Caco-2 (cell line): ENCODE measurements at regions of chr4 and their contacts with region 1.

Region 1: DNA sequence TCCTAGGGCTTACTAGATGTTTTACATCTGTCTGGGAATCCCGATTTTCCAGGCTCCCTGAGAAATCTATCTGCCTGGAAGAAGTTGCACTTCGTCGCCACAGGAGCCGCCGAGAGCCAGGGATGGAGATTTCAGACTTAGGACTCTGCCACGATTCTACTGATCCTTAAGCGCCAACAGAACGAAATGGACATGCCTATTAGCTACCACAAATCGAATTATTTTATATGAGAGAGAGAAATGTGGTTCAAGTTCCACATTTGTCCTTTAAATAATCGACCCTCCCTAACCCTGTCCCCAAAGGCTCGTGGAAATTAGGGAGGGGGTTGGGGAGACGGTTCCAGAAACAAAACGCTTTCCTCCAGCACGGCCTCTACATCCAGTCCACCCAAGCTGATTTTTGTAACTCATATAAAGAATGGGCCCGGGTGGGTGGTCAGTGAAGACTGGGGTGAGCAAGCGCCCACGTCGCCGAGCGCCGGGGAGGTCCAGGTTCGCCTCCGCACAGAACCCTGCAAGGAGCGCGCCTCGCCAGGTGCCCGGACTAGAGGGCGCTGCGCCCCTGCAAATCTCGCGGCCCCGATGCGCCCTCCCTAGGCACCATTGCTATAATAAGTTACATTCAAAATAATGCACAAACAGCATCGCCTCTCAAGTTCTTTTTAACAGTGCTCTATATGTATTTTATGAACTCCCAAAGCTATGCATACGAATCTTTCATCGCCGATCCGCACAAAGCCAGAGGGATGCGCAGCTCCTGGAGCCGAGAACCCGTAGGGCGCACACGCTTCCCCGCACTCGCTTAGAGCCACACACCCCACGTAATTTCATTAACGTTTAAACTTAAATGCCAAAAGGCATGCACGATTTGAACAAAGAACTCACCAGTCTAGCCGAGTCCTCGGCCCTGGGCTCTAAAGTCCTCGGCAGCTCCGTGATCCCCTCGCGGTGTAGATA is 2.1 kb upstream of the FAT1 start:
- DNase-seq: peak; percentile 72 to 82
- H3K4me3 ChIP-seq: peak overlapping the region; percentile 83
- H3K4me3 Mint-ChIP-seq: peak overlapping the region; percentile 92
- H3K27ac Mint-ChIP-seq: peak overlapping the region; percentile 63
- H3K4me1 ChIP-seq: peaks cover 6% of the 10 kb centered on the region; the same call in 1 of the 2 replicates
- H3K4me1 Mint-ChIP-seq: peaks cover 9% of the 10 kb centered on the region
- H3K27me3 ChIP-seq: no peaks in the 10 kb centered on the region
- H3K27me3 Mint-ChIP-seq: no peaks in the 10 kb centered on the region
- CTCF ChIP-seq: peak; percentile 60 to 80

Region 2: GRCh38 chr4:186297013-186297645 is 428.6 kb before region 1 on chr4:
- CTCF ChIA-PET with region 1: no interaction called
- POLR2A ChIA-PET with region 1: no interaction called
- intact Hi-C with region 1: loop called (anchors 5 kb)
- DNase-seq: peak in 1 of 2 experiments; percentile 43
- H3K4me3 ChIP-seq: no peak overlapping the region
- H3K4me3 Mint-ChIP-seq: no peak overlapping the region
- H3K27ac Mint-ChIP-seq: no peak overlapping the region
- H3K4me1 ChIP-seq: no peaks in the 10 kb centered on the region
- H3K4me1 Mint-ChIP-seq: no peaks in the 10 kb centered on the region
- H3K27me3 ChIP-seq: no peaks in the 10 kb centered on the region
- H3K27me3 Mint-ChIP-seq: peaks cover 7% of the 10 kb centered on the region
- CTCF ChIP-seq: peak; percentile 37 to 62

Region 3: DNA sequence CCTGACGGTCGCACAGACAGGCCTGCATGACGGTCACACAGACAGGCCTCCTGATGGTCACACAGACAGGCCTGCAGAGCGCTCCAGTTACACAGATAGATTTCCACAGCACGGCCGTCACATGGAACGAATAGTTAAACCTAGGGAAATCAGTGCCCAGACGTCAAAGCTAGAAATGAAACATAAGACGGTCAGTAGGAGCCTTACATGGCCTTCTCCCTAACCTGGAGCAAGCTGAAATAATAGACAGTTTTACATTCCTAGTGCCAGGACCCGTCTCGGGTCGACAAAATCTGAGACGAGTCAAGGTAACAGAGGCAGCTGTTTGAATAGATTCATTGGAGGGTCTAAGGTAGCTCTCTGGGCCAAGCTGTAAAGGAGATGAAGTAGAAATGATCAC is 297.3 kb before region 1 on chr4:
- CTCF ChIA-PET with region 1: no interaction called
- POLR2A ChIA-PET with region 1: no interaction called
- intact Hi-C with region 1: no loop called
- DNase-seq: no peak
- H3K4me3 ChIP-seq: no peak overlapping the region
- H3K4me3 Mint-ChIP-seq: no peak overlapping the region
- H3K27ac Mint-ChIP-seq: no peak overlapping the region
- H3K4me1 ChIP-seq: no peaks in the 10 kb centered on the region
- H3K4me1 Mint-ChIP-seq: no peaks in the 10 kb centered on the region
- H3K27me3 ChIP-seq: no peaks in the 10 kb centered on the region
- H3K27me3 Mint-ChIP-seq: no peaks in the 10 kb centered on the region
- CTCF ChIP-seq: no peak

Region 4: GRCh38 chr4:186621959-186622553 is 103.7 kb before region 1 on chr4:
- CTCF ChIA-PET with region 1: no interaction called
- POLR2A ChIA-PET with region 1: no interaction called
- intact Hi-C with region 1: loop called (anchors 2 kb)
- DNase-seq: peak; percentile 79 to 86
- H3K4me3 ChIP-seq: no peak overlapping the region
- H3K4me3 Mint-ChIP-seq: no peak overlapping the region
- H3K27ac Mint-ChIP-seq: peak overlapping the region; percentile 80
- H3K4me1 ChIP-seq: peaks cover 49% of the 10 kb centered on the region
- H3K4me1 Mint-ChIP-seq: peaks cover 29% of the 10 kb centered on the region
- H3K27me3 ChIP-seq: no peaks in the 10 kb centered on the region
- H3K27me3 Mint-ChIP-seq: no peaks in the 10 kb centered on the region
- CTCF ChIP-seq: no peak

Region 5: GRCh38 chr4:186685767-186686183 is 40.0 kb before region 1 on chr4:
- CTCF ChIA-PET with region 1: interaction called, 4 read pairs
- POLR2A ChIA-PET with region 1: interaction called, 4 read pairs
- intact Hi-C with region 1: loop called (anchors 1 kb)
- DNase-seq: peak in 1 of 2 experiments; percentile 49
- H3K4me3 ChIP-seq: no peak overlapping the region
- H3K4me3 Mint-ChIP-seq: peak overlapping the region; percentile 57
- H3K27ac Mint-ChIP-seq: peak overlapping the region; percentile 87
- H3K4me1 ChIP-seq: peaks cover 83% of the 10 kb centered on the region
- H3K4me1 Mint-ChIP-seq: peaks cover 53% of the 10 kb centered on the region
- H3K27me3 ChIP-seq: no peaks in the 10 kb centered on the region
- H3K27me3 Mint-ChIP-seq: no peaks in the 10 kb centered on the region
- CTCF ChIP-seq: no peak

Region 6: GRCh38 chr4:186765138-186765537 is 39.4 kb after region 1 on chr4:
- CTCF ChIA-PET with region 1: no interaction called
- POLR2A ChIA-PET with region 1: interaction called, 3 read pairs
- intact Hi-C with region 1: loop called (anchors 5 kb)
- DNase-seq: peak; percentile 13 to 65
- H3K4me3 ChIP-seq: no peak overlapping the region
- H3K4me3 Mint-ChIP-seq: no peak overlapping the region
- H3K27ac Mint-ChIP-seq: peak overlapping the region; percentile 71
- H3K4me1 ChIP-seq: peaks cover 19% of the 10 kb centered on the region
- H3K4me1 Mint-ChIP-seq: no peaks in the 10 kb centered on the region
- H3K27me3 ChIP-seq: no peaks in the 10 kb centered on the region
- H3K27me3 Mint-ChIP-seq: no peaks in the 10 kb centered on the region
- CTCF ChIP-seq: no peak

Region 7: GRCh38 chr4:186792728-186793366 is 67.1 kb after region 1 on chr4:
- CTCF ChIA-PET with region 1: no interaction called
- POLR2A ChIA-PET with region 1: no interaction called
- intact Hi-C with region 1: no loop called
- DNase-seq: no peak
- H3K4me3 ChIP-seq: no peak overlapping the region
- H3K4me3 Mint-ChIP-seq: no peak overlapping the region
- H3K27ac Mint-ChIP-seq: no peak overlapping the region
- H3K4me1 ChIP-seq: no peaks in the 10 kb centered on the region
- H3K4me1 Mint-ChIP-seq: no peaks in the 10 kb centered on the region
- H3K27me3 ChIP-seq: no peaks in the 10 kb centered on the region
- H3K27me3 Mint-ChIP-seq: no peaks in the 10 kb centered on the region
- CTCF ChIP-seq: no peak

Region 8: GRCh38 chr4:186936496-186937375 is 211.0 kb after region 1 on chr4:
- CTCF ChIA-PET with region 1: no interaction called
- POLR2A ChIA-PET with region 1: no interaction called
- intact Hi-C with region 1: loop called (anchors 2 kb)
- DNase-seq: peak in 1 of 2 experiments; percentile 41
- H3K4me3 ChIP-seq: peak overlapping the region; percentile 1; the same call in 1 of the 2 replicates
- H3K4me3 Mint-ChIP-seq: peak overlapping the region; percentile 80
- H3K27ac Mint-ChIP-seq: peak overlapping the region; percentile 100
- H3K4me1 ChIP-seq: peaks cover 20% of the 10 kb centered on the region
- H3K4me1 Mint-ChIP-seq: peaks cover 12% of the 10 kb centered on the region
- H3K27me3 ChIP-seq: no peaks in the 10 kb centered on the region
- H3K27me3 Mint-ChIP-seq: no peaks in the 10 kb centered on the region
- CTCF ChIP-seq: no peak

Region 9: GRCh38 chr4:187606581-187606980 is 880.8 kb after region 1 on chr4:
- CTCF ChIA-PET with region 1: no interaction called
- POLR2A ChIA-PET with region 1: no interaction called
- intact Hi-C with region 1: loop called (anchors 10 kb)
- DNase-seq: peak; percentile 38 to 48
- H3K4me3 ChIP-seq: no peak overlapping the region
- H3K4me3 Mint-ChIP-seq: no peak overlapping the region
- H3K27ac Mint-ChIP-seq: no peak overlapping the region
- H3K4me1 ChIP-seq: no peaks in the 10 kb centered on the region
- H3K4me1 Mint-ChIP-seq: no peaks in the 10 kb centered on the region
- H3K27me3 ChIP-seq: no peaks in the 10 kb centered on the region
- H3K27me3 Mint-ChIP-seq: no peaks in the 10 kb centered on the region
- CTCF ChIP-seq: peak; percentile 68 to 82